ENCODE measurements at regions of chr7 and their contacts with region 1.

Region 1: GRCh38 chr7:22885797-22886261 is 63.2 kb upstream of the TOMM7 start:
- DNase-seq: no peak
- H3K4me3 ChIP-seq: no peak overlapping the region
- CTCF ChIP-seq: no peak

Region 2: GRCh38 chr7:22814261-22815208 is 71.3 kb before region 1 on chr7:
- in situ Hi-C with region 1: no loop called
- DNase-seq: peak; percentile 27
- H3K4me3 ChIP-seq: no peak overlapping the region
- CTCF ChIP-seq: no peak

Region 3: DNA sequence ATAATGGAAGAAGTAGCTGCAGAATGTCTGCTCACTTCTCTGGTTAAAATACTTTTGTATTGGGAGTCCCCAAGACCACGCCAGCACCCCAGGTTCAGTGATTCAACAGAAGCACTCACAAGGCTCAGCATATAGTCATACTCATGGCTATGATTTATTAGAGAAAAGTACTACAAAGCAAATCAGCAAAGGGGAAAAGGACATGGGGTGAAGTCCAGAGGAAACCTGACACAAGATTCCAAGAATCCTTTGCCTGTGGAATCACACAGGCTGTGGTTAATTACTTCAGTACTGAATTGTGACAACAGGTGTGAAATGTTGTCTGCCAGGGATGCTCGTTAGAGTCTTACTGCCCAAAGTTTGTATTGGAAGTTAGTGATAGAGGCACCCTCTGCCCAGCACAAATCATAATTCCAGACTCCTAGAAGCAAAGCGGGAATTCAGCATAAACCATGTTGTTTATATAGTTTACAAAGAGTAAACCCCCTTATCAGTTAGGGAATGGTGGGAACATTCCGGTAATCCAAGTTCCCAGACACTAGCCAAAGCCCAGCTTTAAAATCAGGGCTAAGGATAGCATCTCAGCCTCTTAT is 48.7 kb after region 1 on chr7:
- in situ Hi-C with region 1: loop called (anchors 5 kb)
- DNase-seq: no peak
- H3K4me3 ChIP-seq: no peak overlapping the region
- CTCF ChIP-seq: no peak

Measured in astrocyte of the cerebellum (primary cell).